ENCODE measurements at regions of chr2 and their contacts with region 1.

Region 1: GRCh38 chr2:203453858-203454451 is 81.1 kb downstream of the RAPH1 start:
- DNase-seq: peak; percentile 28 to 58 (median 37)
- ATAC-seq: peak; percentile 79
- H3K4me3 ChIP-seq: no peak overlapping the region
- H3K27ac ChIP-seq: no peak overlapping the region
- H3K4me1 ChIP-seq: no peaks in the 10 kb centered on the region
- H3K27me3 ChIP-seq: no peaks in the 10 kb centered on the region
- CTCF ChIP-seq: peak; percentile 43 to 73 (median 53); a peak in 4 of 6 replicates
- EP300 ChIP-seq: no peak
- POLR2A ChIP-seq: no peak
- RAD21 ChIP-seq: peak; percentile 66 to 79

Region 2: DNA sequence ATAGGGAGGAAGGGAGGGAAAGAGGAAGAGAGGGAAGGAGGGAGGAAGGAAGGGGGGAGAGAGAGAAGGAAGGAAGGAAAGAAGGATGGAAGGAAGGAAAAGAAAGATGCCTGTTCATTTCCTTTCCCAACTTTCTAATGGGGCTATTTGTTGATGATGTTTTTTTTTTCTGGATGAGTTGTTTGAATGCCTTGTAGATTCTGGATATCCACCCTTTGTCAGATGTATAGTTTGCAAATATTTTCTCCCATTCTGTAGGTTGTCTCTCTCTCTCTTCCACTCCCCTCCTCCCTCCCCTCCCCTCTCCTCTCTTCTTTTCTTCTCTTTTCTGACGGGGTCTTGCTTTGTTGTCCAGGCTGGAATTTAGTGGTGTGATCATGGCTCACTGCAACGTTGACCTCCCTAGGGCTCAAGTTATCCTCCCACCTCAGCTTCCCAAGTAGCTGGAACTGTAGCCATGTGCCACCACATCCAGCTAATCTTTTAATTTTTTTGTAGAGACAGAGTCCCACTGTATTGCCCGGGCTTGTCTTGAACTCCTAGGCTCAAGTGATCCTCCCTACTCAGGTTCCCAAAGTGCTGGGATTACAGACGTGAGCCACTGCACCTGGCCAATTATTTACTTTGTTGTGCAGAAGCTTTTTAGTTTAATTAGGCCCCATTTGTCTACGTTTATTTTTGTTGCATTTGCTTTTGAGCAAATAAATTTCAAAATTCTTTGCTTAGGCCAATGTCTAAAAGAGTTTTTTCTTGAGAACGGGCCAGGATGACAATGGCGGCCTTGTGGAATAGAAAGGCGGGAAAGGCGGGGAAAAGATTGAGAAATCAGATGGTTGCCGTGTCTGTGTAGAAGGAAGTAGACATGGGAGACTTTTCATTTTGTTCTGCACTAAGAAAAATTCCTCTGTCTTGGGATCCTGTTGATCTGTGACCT is 876.4 kb before region 1 on chr2:
- CTCF ChIA-PET with region 1: interaction called, 6 read pairs
- POLR2A ChIA-PET with region 1: no interaction called
- in situ Hi-C with region 1: loop called (anchors 25 kb)
- intact Hi-C with region 1: loop called (anchors 5 kb)
- DNase-seq: no peak
- ATAC-seq: no peak
- H3K4me3 ChIP-seq: no peak overlapping the region
- H3K27ac ChIP-seq: no peak overlapping the region
- H3K4me1 ChIP-seq: no peaks in the 10 kb centered on the region
- H3K27me3 ChIP-seq: no peaks in the 10 kb centered on the region
- CTCF ChIP-seq: no peak
- EP300 ChIP-seq: no peak
- POLR2A ChIP-seq: no peak
- RAD21 ChIP-seq: no peak

Region 3: DNA sequence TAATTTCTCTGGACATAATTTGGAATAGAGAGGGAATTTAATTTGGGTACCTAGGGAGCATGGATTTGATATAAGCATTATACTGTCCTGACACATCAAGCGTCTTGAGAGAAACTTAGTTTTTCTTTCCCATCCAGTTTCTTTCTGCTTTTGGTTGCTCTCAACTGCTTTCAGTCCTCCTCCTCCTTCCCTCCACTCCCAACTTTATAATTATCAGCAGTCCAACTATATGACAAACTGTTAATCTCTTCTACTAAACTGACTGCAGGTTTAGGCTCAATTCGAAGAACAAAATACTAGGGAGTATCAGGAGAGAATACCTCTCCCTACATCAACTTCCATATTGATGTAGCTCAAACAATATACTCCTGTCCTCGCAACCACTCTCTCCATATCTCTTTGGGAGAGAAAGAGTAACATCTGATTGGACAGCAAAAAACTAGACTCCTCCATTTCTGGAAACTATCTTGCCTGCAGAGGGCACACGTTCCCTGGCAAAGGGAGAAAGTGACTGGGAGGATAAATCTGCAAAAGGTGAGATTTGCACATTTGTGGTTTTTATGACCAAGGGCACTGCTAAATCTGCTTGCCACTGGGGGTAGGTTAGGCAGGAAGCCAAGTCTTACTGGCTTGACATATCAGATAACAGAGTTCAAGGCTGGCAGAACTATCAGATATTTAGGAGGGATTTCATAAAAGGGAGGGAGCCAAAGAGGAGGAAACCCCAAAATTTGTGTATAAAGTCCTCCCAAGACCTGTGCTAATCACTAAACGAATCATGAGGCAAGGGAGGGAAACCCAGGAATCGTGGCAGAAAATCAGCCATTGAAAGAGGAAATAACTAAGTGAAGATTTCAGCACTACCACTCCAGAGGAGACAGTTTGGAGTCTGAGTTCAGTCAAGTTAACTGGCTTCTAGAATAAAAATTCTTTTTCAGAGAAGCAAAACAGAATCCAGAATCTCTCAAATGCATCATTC is 622.4 kb before region 1 on chr2:
- CTCF ChIA-PET with region 1: no interaction called
- POLR2A ChIA-PET with region 1: no interaction called
- in situ Hi-C with region 1: no loop called
- intact Hi-C with region 1: loop called (anchors 2 kb)
- DNase-seq: peak; percentile 21 to 62 (median 41)
- ATAC-seq: peak; percentile 90
- H3K4me3 ChIP-seq: no peak overlapping the region
- H3K27ac ChIP-seq: no peak overlapping the region
- H3K4me1 ChIP-seq: no peaks in the 10 kb centered on the region
- H3K27me3 ChIP-seq: no peaks in the 10 kb centered on the region
- CTCF ChIP-seq: peak; percentile 56 to 76 (median 59); a peak in 5 of 6 replicates
- EP300 ChIP-seq: no peak
- POLR2A ChIP-seq: no peak
- RAD21 ChIP-seq: peak; percentile 31 to 87

Region 4: DNA sequence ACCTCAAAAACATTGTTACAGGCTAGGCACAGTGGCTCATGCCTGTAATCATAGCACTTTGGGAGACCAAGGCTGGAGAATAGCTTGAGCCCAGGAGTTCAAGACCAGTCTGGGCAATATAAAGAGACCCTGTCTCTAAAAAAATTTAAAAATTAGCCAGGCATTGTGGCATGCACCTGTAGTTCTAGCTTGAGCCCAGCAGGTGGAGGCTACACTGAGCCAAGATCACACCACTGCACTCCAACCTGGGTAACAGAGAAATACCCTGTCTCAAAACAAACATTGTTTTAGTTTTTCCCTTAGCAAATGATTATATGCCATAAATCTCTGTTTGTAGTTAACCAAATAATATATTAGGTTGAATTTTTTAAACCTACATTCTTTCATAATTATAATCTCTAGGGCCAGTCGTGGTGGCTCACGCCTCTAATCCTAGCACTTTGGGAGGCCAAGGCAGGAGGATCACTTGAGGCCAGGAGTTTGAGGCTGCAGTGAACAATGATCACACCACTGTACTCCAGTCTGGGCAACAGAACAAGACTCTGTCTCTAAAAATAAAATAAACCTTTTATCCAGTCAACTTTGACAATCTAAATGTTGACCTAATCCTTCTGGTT is 228.4 kb before region 1 on chr2:
- CTCF ChIA-PET with region 1: interaction called, 3 read pairs
- POLR2A ChIA-PET with region 1: no interaction called
- in situ Hi-C with region 1: no loop called
- intact Hi-C with region 1: loop called (anchors 2 kb)
- DNase-seq: peak in 1 of 4 experiments; percentile 35
- ATAC-seq: peak; percentile 85
- H3K4me3 ChIP-seq: no peak overlapping the region
- H3K27ac ChIP-seq: no peak overlapping the region
- H3K4me1 ChIP-seq: no peaks in the 10 kb centered on the region
- H3K27me3 ChIP-seq: no peaks in the 10 kb centered on the region
- CTCF ChIP-seq: peak; percentile 57 to 62 (median 61)
- EP300 ChIP-seq: no peak
- POLR2A ChIP-seq: no peak
- RAD21 ChIP-seq: peak in 1 of 2 experiments; percentile 61; a peak in 2 of 4 replicates

Region 5: GRCh38 chr2:203533676-203534591 is 80.0 kb after region 1 on chr2:
- CTCF ChIA-PET with region 1: no interaction called
- POLR2A ChIA-PET with region 1: no interaction called
- in situ Hi-C with region 1: no loop called
- intact Hi-C with region 1: no loop called
- DNase-seq: peak in 2 of 4 experiments; percentile 6 to 9
- ATAC-seq: no peak
- H3K4me3 ChIP-seq: no peak overlapping the region
- H3K27ac ChIP-seq: no peak overlapping the region
- H3K4me1 ChIP-seq: peaks cover 5 to 8% of the 10 kb centered on the region in 2 experiments; a peak in 4 of 5 replicates
- H3K27me3 ChIP-seq: peaks cover 4 to 6% of the 10 kb centered on the region in 2 experiments; a peak in 1 of 5 replicates
- CTCF ChIP-seq: no peak
- EP300 ChIP-seq: no peak
- POLR2A ChIP-seq: no peak
- RAD21 ChIP-seq: no peak

Region 6: GRCh38 chr2:203673933-203674332 is 220.0 kb after region 1 on chr2:
- CTCF ChIA-PET with region 1: no interaction called
- POLR2A ChIA-PET with region 1: no interaction called
- in situ Hi-C with region 1: no loop called
- intact Hi-C with region 1: no loop called
- DNase-seq: no peak
- ATAC-seq: no peak
- H3K4me3 ChIP-seq: no peak overlapping the region
- H3K27ac ChIP-seq: no peak overlapping the region
- H3K4me1 ChIP-seq: no peaks in the 10 kb centered on the region
- H3K27me3 ChIP-seq: no peaks in the 10 kb centered on the region
- CTCF ChIP-seq: no peak
- EP300 ChIP-seq: no peak
- POLR2A ChIP-seq: no peak
- RAD21 ChIP-seq: no peak